GM10248 (cell line): ENCODE measurements at regions of chr5 and their contacts with region 1.

Region 1: GRCh38 chr5:1380011-1380817 is 35.3 kb upstream of the CLPTM1L start:
- DNase-seq: no peak
- CTCF ChIP-seq: peak; percentile 76

Region 2: DNA sequence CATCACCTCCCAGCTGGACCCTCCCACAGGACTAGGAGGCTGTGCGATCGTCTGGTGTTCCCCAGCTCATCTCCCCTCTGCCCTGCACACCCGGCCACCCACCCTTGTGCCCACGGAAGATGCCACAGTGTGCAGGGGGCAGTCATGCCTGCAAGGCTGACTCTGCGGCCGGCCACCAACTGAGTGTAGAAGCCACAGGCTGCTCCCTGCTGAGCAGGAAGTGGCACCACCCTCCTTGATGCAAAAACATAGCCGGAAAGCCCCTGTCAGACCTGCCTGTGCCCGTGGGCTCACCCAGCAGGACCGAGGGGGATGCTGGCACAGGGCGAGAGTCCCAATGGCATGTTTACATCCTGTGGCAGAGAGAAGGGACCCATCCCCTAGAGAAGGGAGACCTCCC is 228.1 kb before region 1 on chr5:
- CTCF ChIA-PET with region 1: no interaction called
- POLR2A ChIA-PET with region 1: no interaction called
- DNase-seq: no peak
- CTCF ChIP-seq: no peak

Region 3: DNA sequence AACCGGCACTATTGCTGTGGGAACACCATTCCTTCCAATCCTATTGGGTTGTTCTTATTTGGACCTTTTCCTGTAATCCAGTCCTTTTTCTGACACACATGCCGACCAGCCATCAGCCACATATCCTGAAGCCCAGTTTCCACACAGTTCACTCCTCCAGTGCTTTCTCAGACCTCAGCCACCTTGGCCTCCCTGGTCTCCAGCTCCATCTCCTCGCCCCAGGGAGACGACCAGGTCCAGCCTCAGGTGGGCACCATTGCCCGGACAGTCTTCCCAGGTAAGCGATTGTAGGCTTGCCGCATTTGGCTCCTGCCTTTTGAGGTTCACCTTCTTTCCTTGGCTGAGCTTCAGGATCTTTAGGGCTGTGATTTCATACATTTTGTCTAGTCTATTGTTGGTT is 70.1 kb before region 1 on chr5:
- CTCF ChIA-PET with region 1: no interaction called
- POLR2A ChIA-PET with region 1: no interaction called
- DNase-seq: no peak
- CTCF ChIP-seq: no peak

Region 4: DNA sequence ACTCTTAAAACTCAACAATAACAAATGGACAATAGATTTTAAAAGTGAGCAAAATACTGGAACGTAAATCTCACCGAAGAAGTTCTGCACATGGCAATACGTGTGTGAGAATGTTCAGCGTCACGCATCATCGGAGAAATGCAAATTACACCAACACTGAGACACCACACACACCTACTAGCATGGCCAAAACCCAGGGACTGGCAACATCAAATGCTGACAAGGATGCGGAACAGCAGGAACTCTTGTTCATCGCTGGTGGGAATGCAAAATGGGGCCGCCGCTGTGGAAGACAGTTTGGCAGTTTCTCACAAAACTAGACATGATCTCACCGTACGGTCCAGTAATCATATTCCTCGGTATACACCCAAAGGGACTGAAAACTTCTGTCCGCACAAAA is 13.7 kb before region 1 on chr5:
- CTCF ChIA-PET with region 1: interaction called, 12 read pairs
- POLR2A ChIA-PET with region 1: no interaction called
- DNase-seq: peak; percentile 61
- CTCF ChIP-seq: no peak

Region 5: DNA sequence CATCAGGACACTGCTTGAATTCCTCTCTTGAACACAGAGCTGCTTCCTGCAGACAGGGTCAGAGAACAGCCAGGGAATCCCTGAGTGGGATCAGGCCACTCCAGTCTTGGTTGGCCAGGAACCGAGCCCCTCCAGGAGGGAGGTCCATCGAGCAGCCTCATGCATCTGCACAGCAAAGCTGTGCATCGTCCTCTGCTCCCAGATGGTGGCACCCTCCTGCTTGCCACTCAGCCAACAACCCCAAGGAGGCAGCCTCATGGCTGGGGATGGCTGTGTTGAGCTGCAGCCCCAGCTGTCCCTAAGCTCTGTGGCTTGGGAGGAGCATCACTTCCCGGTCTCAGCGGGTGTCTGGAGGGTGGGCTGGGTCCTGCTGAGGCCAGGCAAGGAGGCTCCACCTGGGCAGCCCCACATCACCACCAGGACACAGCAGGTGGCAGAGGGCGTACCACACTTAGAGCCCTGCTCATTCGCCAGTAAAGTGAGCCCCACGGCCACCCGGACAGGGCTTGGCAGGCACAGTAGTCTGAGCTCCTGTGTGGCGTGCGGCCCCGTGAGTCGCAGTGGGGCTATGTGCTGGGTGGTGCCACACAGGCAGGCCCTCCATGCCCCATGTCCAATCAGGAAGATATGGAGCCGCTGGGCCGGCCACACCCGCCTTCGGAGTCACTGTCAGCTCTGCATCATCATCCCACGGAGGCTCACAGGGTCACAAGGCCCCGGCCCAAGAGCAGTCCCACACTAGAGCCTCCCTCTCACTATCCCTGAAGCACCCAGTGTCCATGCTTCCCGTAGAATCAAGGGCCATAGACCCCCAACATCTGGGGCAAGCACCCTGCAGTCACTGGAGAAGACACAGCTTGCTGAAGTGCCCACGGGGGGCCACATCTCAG is 131.7 kb after region 1 on chr5:
- CTCF ChIA-PET with region 1: no interaction called
- POLR2A ChIA-PET with region 1: no interaction called
- DNase-seq: no peak
- CTCF ChIP-seq: peak; percentile 53